Breast epithelium (tissue), 4 donors: ENCODE measurements at regions of chr5 and their contacts with region 1.

Region 1: DNA sequence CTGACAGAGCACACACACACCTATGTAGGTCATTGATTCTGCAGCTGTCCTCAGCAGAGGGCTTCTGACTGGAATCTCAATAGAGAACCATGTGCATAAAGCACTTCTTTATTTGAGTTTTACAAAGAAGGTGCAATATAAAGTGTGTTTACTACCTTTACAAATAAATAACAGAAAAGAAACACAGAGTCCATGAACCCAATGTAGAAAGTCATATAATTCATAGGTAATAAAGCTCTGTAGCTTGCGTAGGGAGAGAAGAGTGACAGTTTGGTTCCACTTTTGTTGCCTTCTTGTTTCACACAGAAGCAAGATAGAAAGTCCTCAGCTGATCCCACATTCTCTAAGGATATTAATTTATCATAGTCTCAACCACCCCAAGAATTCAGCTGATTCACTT is 149.5 kb downstream of the GABRG2 start:
- DNase-seq: no peak
- H3K4me3 ChIP-seq: no peak overlapping the region
- H3K27ac ChIP-seq: no peak overlapping the region
- H3K4me1 ChIP-seq: no peaks in the 10 kb centered on the region
- H3K27me3 ChIP-seq: no peaks in the 10 kb centered on the region
- CTCF ChIP-seq: no peak
- POLR2A ChIP-seq: no peak

Region 2: GRCh38 chr5:162248107-162248713 is 31.2 kb after region 1 on chr5:
- intact Hi-C with region 1: loop called (anchors 5 kb)
- DNase-seq: no peak
- H3K4me3 ChIP-seq: no peak overlapping the region
- H3K27ac ChIP-seq: no peak overlapping the region
- H3K4me1 ChIP-seq: no peaks in the 10 kb centered on the region
- H3K27me3 ChIP-seq: no peaks in the 10 kb centered on the region
- CTCF ChIP-seq: no peak
- POLR2A ChIP-seq: no peak